ENCODE measurements at regions of chr7 and their contacts with region 1.

Region 1: GRCh38 chr7:130322587-130322986 is 22.0 kb upstream of the CPA5 start:
- DNase-seq: no peak
- ATAC-seq: no peak
- H3K4me3 ChIP-seq: no peak overlapping the region
- H3K27ac ChIP-seq: no peak overlapping the region
- H3K4me1 ChIP-seq: no peaks in the 10 kb centered on the region
- H3K27me3 ChIP-seq: no peaks in the 10 kb centered on the region
- CTCF ChIP-seq: no peak
- POLR2A ChIP-seq: no peak

Region 2: GRCh38 chr7:130069978-130070860 is 252.4 kb before region 1 on chr7 and contains the start of gene KLHDC10:
- intact Hi-C with region 1: no loop called
- DNase-seq: peak; percentile 97 to 98 (median 98)
- ATAC-seq: peak; percentile 98 to 100 (median 99)
- H3K4me3 ChIP-seq: peak within 1 kb of the TSS; percentile 74 to 98 (median 84)
- H3K27ac ChIP-seq: peak within 1 kb of the TSS; percentile 45 to 92 (median 87)
- H3K4me1 ChIP-seq: peaks cover 5 to 42% (median 22%) of the 10 kb centered on the region in 12 donors
- H3K27me3 ChIP-seq: no peaks in the 10 kb centered on the region
- CTCF ChIP-seq: peak in 1 of 12 donors; percentile 26
- POLR2A ChIP-seq: peak in 1 of 2 donors; percentile 66
- total RNA-seq, gene KLHDC10: 17.2 to 32.6 (median 26.5) TPM

Region 3: DNA sequence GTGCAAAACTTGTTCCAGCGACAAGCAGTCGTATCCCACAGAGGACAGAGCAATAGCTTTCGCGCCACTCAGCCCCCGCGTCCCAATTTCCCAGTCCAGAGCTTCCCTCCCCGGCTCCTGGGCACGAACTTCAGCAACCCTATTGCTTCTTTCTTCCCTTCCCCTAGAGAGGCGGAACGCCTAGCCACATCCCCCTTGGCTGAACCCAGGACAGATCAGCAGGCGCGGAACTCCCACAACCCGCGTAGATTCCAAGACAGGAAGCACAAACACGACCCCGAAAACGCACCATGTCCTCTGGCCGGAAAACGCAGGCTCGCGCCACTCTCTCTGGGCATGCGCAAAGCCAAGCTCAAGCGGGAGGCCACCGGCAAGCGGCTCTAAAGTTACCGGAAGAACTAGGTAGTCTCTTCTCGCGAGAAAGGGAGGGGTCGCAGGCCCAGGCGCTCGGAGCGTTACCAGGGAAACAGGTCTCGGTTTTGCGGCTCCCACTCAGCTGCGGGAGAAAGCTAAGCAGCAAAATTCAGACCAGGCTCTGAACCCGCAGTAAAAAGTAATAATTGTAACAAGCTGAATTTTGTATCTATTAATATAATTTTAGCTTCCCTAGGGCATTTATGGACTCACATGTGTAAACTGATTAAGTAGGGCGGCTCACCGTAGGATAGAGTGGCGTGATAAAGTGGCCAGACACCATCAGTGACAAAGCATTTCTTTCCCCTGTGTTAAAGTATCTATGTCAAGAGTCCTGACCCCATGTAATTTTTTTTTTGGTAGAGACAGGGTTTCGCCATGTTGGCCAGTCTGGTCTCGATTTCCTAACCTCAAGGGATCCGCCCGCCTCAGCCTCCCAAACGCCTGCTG is 117.3 kb before region 1 on chr7 and contains the start of gene TMEM209:
- intact Hi-C with region 1: no loop called
- DNase-seq: peak; percentile 95 to 98 (median 96)
- ATAC-seq: peak; percentile 98 to 99 (median 99)
- H3K4me3 ChIP-seq: peak within 1 kb of the TSS; percentile 65 to 94 (median 78)
- H3K27ac ChIP-seq: peak within 1 kb of the TSS; percentile 62 to 93 (median 90)
- H3K4me1 ChIP-seq: peaks cover 0 to 18% (median 5%) of the 10 kb centered on the region in 12 donors
- H3K27me3 ChIP-seq: no peaks in the 10 kb centered on the region
- CTCF ChIP-seq: peak in 1 of 12 donors; percentile 8
- POLR2A ChIP-seq: peak in 1 of 2 donors; percentile 69
- total RNA-seq, gene TMEM209: 7.3 to 15.0 (median 10.1) TPM

Region 4: GRCh38 chr7:130379921-130380860 is 57.6 kb after region 1 on chr7 and contains the start of gene CPA1:
- intact Hi-C with region 1: loop called in 1 of 10 experiments (anchors 10 kb)
- DNase-seq: no peak
- ATAC-seq: peak in 2 of 4 donors; percentile 14 to 39
- H3K4me3 ChIP-seq: no peak within 1 kb of the TSS
- H3K27ac ChIP-seq: no peak within 1 kb of the TSS
- H3K4me1 ChIP-seq: peaks cover 0 to 11% (median 0%) of the 10 kb centered on the region in 12 donors
- H3K27me3 ChIP-seq: no peaks in the 10 kb centered on the region
- CTCF ChIP-seq: no peak
- POLR2A ChIP-seq: no peak
- total RNA-seq, gene CPA1: 1.3 to 3.8 (median 3.1) TPM in 5 of 9 donors, not detected in the others

Region 5: GRCh38 chr7:130486114-130486958 is 163.7 kb after region 1 on chr7:
- intact Hi-C with region 1: no loop called
- DNase-seq: peak; percentile 32 to 70 (median 60)
- ATAC-seq: peak in 3 of 4 donors; percentile 76 to 78 (median 78)
- H3K4me3 ChIP-seq: peak overlapping the region in 11 of 12 donors; percentile 34 to 57 (median 53)
- H3K27ac ChIP-seq: no peak overlapping the region
- H3K4me1 ChIP-seq: peaks cover 0 to 29% (median 13%) of the 10 kb centered on the region in 12 donors
- H3K27me3 ChIP-seq: peaks cover 0 to 39% (median 13%) of the 10 kb centered on the region in 9 donors
- CTCF ChIP-seq: peak; percentile 58 to 81 (median 70)
- POLR2A ChIP-seq: no peak

Region 6: DNA sequence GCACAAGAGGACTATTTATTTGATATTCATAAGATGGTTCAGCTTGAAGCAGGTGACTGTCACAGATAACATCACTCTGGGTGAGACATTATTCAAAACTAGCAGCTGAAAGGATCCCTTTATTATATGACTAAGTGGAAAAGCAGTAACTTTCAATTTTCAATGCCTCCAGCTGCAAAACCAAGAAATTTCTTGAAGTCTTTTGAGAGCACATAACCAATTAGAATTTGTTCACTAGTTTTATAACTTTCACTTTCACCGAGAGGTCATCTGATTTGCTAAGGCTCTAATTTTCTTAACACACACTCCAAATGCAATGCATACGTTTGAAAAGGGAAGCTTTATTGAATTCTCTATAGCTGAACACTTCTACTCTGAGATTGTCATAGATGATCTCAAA is 500.1 kb after region 1 on chr7:
- intact Hi-C with region 1: no loop called
- DNase-seq: no peak
- ATAC-seq: no peak
- H3K4me3 ChIP-seq: no peak overlapping the region
- H3K27ac ChIP-seq: no peak overlapping the region
- H3K4me1 ChIP-seq: no peaks in the 10 kb centered on the region
- H3K27me3 ChIP-seq: no peaks in the 10 kb centered on the region
- CTCF ChIP-seq: no peak
- POLR2A ChIP-seq: no peak